Activated CD4-positive, alpha-beta T cell treated with anti-CD3 and anti-CD28 coated beads, Interleukin-2, amount 10 ng/mL, durations not matched to agents 7 days and 5 days (primary cell): ENCODE measurements at regions of chr14 and their contacts with region 1.

Region 1: DNA sequence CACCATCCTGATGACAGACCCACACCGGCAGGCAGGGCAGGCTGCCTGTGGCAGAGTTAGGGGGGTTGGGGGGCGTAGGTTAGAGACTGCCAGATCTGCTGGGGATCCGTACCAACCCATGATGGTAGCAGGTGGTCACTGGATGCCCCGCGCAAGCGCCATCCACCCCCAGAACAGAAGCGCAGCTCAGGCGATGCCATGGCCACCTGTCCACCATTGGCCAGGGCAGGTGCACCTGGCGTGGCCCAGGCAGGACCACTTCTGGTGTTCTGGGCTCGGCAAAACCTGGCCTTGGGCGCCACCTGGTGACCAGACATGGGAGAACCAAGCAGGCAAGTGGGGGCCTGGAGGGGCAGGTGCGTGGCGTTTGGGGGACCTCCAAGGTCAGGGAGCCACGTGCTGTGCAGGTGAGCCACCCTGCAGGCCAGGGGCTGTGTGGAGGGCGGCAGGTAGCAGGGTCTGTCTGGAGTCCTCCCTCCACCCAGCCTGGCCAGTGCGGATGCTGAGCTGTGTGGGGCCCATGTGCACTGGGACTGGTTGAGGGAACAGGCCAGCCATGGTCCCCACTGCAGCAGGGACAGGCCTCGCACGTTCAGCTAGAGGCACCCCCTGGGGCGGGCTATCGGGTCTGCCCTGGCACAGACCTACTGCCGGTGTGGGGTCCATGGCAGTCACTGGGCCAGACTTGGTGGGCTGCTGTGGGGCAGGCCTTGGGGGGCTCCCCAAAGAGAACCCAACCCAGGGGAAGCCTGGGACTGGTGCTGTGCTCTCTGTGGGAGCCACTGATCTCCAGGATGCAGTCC is 15.6 kb downstream of the BAG5 start:
- DNase-seq: peak; percentile 76
- H3K4me3 Mint-ChIP-seq: no peak overlapping the region
- H3K27ac Mint-ChIP-seq: no peak overlapping the region
- H3K4me1 Mint-ChIP-seq: no peaks in the 10 kb centered on the region
- H3K27me3 Mint-ChIP-seq: no peaks in the 10 kb centered on the region

Region 2: DNA sequence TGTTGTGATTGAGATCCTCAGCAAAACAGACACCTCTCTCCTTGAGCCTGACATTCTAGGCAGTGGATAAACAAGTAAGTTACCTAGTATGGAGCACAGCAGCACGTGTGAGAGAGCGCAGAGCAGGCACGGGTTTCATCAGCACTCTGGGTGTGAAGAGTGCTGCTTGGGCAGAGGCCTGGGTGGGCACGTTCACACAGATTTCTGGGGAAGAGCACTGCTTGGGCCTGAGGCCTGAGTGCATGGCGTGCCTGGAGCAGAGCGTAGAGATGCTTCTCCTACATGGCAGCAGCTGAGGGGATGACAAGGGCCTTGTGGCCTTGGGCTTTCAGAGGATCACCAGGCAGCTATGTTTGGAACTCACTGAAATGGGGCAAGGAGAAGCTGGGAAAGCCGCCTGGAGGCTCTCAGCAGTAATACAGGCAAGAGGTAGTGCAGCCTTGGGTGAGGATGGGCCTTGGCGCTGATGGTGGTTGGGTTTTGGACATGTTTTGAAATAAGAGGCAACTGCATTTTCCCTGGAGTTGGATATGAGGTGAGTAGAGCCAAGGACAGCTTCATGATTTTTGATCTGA is 41.8 kb before region 1 on chr14:
- CTCF ChIA-PET with region 1: no interaction called
- POLR2A ChIA-PET with region 1: no interaction called
- DNase-seq: no peak
- H3K4me3 Mint-ChIP-seq: no peak overlapping the region
- H3K27ac Mint-ChIP-seq: peak overlapping the region; percentile 51
- H3K4me1 Mint-ChIP-seq: peaks cover 3% of the 10 kb centered on the region
- H3K27me3 Mint-ChIP-seq: no peaks in the 10 kb centered on the region

Region 3: GRCh38 chr14:103561377-103562178 is 14.7 kb after region 1 on chr14:
- CTCF ChIA-PET with region 1: interaction called, 15 read pairs
- POLR2A ChIA-PET with region 1: no interaction called
- DNase-seq: peak; percentile 62
- H3K4me3 Mint-ChIP-seq: peak overlapping the region; percentile 92
- H3K27ac Mint-ChIP-seq: peak overlapping the region; percentile 90
- H3K4me1 Mint-ChIP-seq: peaks cover 68% of the 10 kb centered on the region
- H3K27me3 Mint-ChIP-seq: no peaks in the 10 kb centered on the region

Region 4: DNA sequence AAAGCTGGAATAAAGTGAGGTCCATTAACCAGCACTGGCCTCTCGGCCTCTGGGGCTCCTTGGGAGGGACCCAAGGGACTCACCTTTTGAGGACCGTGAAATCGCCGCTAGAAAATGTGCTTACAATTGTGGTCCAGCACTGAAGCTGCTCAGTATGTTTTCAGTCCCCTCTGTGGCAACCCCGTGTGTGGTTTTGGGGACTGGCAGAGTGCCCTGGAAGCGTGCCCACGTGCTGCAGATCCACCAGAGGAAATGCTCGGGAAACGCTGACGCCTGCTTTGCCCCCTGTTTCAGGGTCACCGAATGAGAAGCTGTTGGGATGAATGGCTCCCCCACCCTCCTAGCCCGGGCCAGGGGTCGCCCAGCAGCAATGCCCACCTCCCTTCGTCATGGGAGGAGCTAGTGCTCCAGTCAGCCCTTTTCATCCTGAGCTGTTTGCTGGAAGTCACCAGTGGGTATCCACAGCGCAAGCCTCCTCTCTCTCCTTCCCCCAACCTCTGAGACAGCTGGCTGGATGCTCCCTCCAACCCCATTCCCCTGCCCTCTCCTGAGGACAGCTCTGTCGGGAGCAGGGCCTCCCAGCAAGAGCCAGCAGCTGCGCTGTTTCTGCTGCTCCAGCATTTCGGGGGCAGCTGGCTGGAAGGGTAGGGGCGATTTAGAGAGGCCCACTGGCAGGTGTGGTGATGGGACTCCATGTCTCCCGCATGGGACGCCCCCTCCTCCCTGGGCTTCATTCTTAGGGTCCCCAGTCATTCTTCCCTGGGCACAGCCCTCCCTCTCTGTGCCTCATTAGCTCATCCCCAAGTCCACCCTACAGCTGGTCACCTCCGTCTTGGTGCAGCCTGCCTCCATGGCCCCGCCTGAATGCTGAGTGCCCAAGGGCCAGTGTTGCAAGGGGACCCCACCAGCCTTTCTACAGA is 333.8 kb after region 1 on chr14:
- CTCF ChIA-PET with region 1: no interaction called
- POLR2A ChIA-PET with region 1: no interaction called
- DNase-seq: no peak
- H3K4me3 Mint-ChIP-seq: peak overlapping the region; percentile 41
- H3K27ac Mint-ChIP-seq: no peak overlapping the region
- H3K4me1 Mint-ChIP-seq: peaks cover 14% of the 10 kb centered on the region
- H3K27me3 Mint-ChIP-seq: no peaks in the 10 kb centered on the region